ENCODE measurements at regions of chr12 and their contacts with region 1.

Region 1: DNA sequence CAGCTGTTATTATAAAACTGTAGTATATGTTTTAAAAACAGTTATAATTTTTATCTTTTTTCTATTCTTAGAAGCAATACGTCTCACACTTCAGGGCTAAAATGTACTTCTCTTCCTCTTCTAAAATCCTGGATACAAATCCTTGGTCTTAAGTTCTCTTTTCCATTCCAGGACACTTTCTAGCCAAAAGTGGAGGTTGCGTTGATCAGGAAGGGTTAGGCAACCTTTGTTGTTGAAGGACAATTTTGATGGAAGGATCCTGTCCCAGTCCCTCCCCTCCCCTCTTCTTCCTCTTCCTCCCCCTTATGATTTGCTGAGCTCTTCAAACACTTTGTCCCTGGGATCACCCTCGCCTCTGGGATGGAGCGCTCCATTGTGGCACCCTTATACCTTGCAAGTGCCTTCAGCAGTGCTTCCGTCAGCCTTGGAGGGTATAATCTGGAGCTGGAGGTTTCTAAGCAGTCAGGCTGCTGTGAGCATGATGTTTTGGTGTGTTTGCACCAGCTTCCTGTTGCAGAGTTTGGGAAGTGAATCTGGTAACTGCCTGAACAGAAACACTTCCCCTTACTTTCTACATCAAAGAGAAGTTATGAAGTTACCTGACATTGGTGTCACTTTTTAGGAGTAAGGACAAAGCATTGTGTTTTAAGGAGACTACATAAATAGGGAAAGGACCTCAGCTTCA is 87.4 kb upstream of the SLC38A2 start:
- DNase-seq: peak in 5 of 14 experiments; percentile 14 to 51 (median 35)
- ATAC-seq: peak; percentile 62
- H3K4me3 ChIP-seq: peak overlapping the region; percentile 10
- H3K4me3 Mint-ChIP-seq: peak overlapping the region; percentile 84
- H3K27ac ChIP-seq: peak overlapping the region in 1 of 2 donors; percentile 50
- H3K27ac Mint-ChIP-seq: peak overlapping the region; percentile 76
- H3K4me1 ChIP-seq: peaks cover 42% of the 10 kb centered on the region
- H3K4me1 Mint-ChIP-seq: peaks cover 61% of the 10 kb centered on the region
- H3K27me3 ChIP-seq: no peaks in the 10 kb centered on the region
- H3K27me3 Mint-ChIP-seq: no peaks in the 10 kb centered on the region
- CTCF ChIP-seq: no peak

Region 2: DNA sequence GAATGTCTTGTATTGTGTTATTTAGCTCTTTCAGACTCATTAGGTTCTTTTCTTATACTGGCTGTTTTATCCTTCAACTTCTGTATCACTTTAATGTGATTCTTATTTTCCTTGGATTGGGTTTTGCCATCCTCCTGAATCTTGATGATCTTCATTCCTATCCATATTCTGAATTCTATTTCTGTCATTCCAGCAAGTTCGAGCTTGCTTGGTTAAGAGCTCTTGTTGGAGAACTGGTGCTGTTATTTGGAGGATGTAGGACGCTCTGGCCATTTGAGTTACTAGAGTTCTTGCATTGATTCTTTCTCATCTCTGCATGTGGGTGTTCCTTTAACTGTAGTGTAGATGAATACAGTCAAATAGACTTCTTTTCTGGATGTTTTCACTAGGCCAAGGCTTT is 54.9 kb after region 1 on chr12:
- CTCF ChIA-PET with region 1: no interaction called
- POLR2A ChIA-PET with region 1: no interaction called
- intact Hi-C with region 1: loop called in 1 of 2 experiments (anchors 5 kb)
- DNase-seq: no peak
- ATAC-seq: no peak
- H3K4me3 ChIP-seq: no peak overlapping the region
- H3K4me3 Mint-ChIP-seq: no peak overlapping the region
- H3K27ac ChIP-seq: no peak overlapping the region
- H3K27ac Mint-ChIP-seq: no peak overlapping the region
- H3K4me1 ChIP-seq: peaks cover 11% of the 10 kb centered on the region
- H3K4me1 Mint-ChIP-seq: peaks cover 40% of the 10 kb centered on the region
- H3K27me3 ChIP-seq: no peaks in the 10 kb centered on the region
- H3K27me3 Mint-ChIP-seq: no peaks in the 10 kb centered on the region
- CTCF ChIP-seq: no peak

Region 3: DNA sequence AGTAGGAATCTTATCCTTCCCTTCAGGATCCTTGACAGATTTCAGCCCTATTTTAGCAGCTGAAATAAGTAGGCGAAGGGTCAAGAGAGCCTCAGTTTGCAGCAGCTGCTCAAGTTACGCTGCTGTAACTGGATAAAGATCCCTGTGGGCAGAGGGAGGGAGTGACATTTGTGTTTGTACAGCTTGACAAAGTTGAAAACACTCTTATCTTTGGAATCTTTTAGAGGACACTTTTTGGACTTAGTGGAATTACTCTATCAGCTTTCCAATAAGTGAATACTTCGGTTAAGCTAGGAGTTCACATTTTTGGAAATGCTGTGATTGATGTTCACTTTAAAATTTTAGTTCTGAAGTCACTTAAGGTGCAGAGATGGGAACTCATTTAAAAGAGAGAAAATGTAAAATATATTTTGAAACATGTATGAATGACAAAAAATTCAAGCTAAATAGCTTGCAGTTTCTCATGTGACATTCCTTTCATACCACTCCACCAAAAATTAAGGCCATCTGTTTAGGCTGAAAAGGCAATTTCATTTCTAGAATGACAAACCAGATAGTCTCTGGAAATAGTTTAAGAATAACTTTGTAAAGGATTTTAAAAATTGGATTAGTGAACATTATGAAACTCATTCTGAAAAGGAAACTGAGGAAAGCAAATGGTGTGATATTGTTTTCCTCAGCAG is 310.6 kb after region 1 on chr12:
- CTCF ChIA-PET with region 1: no interaction called
- POLR2A ChIA-PET with region 1: no interaction called
- intact Hi-C with region 1: no loop called
- DNase-seq: no peak
- ATAC-seq: no peak
- H3K4me3 ChIP-seq: no peak overlapping the region
- H3K4me3 Mint-ChIP-seq: no peak overlapping the region
- H3K27ac ChIP-seq: no peak overlapping the region
- H3K27ac Mint-ChIP-seq: no peak overlapping the region
- H3K4me1 ChIP-seq: no peaks in the 10 kb centered on the region
- H3K4me1 Mint-ChIP-seq: no peaks in the 10 kb centered on the region
- H3K27me3 ChIP-seq: no peaks in the 10 kb centered on the region
- H3K27me3 Mint-ChIP-seq: peaks cover 5% of the 10 kb centered on the region
- CTCF ChIP-seq: no peak